Right ventricle myocardium inferior (tissue), 1 donor: ENCODE measurements at regions of chr4 and their contacts with region 1.

Region 1: GRCh38 chr4:184538023-184538599 is 63.8 kb upstream of the IRF2 start:
- DNase-seq: peak; percentile 94
- ATAC-seq: peak; percentile 93

Region 2: DNA sequence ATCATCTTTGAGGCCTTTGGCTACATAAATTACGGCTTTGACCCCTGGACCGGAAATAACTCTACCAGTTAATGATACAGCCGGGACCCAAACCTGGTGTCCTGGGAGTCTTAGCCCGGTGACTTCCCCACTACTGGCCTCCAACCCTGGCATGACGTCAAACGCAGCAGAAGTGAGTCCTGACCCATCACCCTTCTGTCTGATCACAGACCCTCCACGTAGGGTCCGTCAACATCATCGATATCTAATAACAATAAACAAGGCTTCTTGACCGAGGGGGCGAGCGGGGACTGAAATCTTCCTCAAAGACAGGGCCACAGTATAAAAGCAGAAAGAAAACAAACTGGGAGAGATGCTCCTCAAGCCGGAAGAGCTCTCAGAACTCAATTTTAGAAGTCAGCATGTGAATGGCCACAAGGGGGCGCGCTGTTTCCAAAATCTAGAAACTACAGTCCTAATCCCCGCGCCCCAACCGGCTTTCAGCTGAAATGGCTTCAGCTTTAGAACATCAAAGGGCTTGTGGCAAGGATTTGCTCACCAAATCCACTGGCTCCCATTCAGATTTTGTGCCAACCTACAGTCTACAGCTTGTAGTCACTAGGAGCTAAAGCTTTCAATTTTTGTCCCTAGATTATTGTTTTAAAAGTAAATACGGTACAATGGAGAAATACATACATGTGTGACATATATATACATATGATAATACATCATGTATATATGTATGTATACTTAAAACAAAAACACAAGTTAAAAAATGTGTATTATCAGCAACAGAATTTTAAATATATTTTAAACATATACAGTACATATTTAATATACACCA is 274.0 kb before region 1 on chr4:
- intact Hi-C with region 1: loop called (anchors 1 kb)
- DNase-seq: peak; percentile 96
- ATAC-seq: peak; percentile 82

Region 3: GRCh38 chr4:184287697-184288255 is 250.3 kb before region 1 on chr4:
- intact Hi-C with region 1: loop called (anchors 1 kb)
- DNase-seq: no peak
- ATAC-seq: peak; percentile 74

Region 4: DNA sequence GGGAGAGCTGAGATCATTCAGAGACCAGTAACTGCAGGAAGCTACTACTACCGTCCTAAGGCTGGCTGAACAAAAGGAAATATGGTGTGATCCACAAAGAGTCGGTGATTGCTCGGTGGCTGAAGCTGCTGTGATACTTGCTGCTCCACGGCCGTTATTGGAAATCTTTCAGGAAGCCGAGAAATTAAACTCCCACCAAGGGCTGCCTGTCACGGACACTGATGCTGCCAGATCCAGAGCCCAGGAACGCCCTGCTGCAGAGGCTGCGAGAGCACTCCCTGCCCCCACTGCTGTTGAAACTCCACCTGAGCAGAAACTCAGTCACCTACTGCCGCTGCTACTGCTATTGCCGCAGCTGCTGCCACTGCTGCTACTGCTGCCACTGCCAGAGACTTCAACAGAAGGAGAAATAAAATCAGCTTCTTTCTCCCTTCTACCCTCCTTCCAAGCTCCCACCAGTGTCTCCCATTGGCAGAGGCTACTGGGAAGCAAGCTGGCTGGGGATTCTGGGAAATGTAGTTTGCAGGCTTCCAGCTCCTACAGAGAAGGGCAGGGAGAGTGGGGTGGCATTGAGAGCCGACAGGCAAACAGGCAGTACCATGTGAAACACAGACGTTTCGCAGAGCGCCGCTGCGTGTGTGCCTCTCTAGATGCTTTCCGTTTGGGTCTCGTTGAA is 194.5 kb before region 1 on chr4:
- intact Hi-C with region 1: loop called (anchors 5 kb)
- DNase-seq: peak; percentile 85
- ATAC-seq: peak; percentile 78

Region 5: GRCh38 chr4:184384056-184384809 is 153.9 kb before region 1 on chr4:
- intact Hi-C with region 1: loop called (anchors 1 kb)
- DNase-seq: peak; percentile 60
- ATAC-seq: peak; percentile 58

Region 6: DNA sequence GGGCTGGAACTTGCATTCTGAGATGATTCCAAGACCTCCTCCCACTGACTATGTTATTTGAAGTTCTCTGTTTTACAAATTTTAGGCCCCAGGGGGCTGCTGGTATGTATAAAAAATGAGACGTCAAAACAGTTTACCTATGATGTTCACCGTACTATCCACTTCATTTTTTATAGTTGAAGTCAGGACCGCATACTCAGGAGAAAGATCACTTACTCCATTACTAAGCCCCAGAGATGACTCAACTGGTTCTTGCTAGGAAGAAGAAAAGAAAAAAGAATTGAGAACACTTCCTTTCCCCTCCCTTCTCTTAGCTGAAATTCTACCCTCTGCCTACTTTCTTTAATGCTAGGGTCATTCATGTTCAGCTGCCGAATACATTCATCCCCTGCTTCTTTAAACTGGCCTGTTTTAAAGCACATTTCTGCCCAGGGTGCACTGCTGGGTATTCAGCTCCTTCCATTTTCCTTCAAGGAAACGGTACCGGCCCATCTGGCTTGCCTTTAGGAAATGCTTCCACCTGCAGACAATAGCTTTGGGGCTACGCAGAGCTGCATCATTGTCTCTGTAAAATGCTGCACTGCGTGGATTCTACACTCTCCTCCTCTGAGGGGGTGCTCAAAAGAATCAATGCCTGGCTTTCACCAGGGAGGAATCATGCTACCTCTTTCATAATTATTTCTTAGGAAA is 129.9 kb before region 1 on chr4:
- intact Hi-C with region 1: loop called (anchors 5 kb)
- DNase-seq: no peak
- ATAC-seq: no peak

Region 7: DNA sequence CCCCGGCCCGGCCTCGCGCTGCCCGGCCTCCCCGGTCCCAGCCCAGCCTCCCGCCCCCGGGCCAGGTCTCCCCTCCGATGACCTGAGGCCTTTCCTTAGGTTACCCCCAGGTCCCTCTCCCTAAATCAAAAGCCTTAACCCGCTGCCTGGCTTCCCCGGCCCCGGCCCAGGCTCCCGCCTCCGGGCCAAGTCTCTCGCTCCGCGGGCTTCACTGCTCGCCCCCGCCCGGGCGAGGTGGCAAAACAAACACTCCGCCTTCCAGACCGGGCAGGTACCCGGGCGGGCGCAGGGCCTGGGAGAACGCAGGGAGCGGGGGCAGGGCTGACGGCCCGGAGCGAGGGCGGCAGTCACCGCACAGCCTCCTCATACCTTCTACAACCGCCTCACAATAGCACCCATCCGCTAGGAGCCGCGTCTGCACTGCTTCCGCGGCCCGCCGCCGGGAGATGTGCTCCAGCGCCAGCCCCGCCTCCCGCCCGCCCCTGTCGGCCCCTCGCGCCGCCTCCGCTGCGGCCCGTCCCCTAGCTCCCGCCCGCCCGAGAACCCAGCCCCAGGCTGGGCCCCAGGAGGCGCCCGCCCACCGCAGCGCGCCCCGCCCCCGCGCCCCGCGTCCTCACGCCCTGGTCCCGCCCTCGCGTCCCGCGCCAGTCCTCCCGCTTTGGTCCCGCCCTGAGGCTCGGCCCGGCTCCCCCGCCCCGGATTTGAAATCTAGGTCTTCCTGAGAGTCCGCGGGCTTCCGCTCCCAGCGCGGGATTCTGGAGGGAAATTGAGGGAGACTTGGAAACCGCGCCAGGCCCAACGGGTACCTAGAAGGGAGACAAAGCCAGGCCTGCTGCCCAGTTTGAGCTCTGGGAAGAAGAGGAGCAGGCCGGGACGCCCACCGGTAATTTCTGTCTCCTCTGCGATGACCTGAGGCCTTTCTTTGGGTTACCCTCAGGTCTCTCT is 111.2 kb after region 1 on chr4 and contains the starts of genes CASP3 and PRIMPOL:
- intact Hi-C with region 1: loop called (anchors 2 kb)
- DNase-seq: peak; percentile 99
- ATAC-seq: peak; percentile 98
- total RNA-seq, gene CASP3: 10.4 TPM
- total RNA-seq, gene PRIMPOL: 10.8 TPM

Region 8: DNA sequence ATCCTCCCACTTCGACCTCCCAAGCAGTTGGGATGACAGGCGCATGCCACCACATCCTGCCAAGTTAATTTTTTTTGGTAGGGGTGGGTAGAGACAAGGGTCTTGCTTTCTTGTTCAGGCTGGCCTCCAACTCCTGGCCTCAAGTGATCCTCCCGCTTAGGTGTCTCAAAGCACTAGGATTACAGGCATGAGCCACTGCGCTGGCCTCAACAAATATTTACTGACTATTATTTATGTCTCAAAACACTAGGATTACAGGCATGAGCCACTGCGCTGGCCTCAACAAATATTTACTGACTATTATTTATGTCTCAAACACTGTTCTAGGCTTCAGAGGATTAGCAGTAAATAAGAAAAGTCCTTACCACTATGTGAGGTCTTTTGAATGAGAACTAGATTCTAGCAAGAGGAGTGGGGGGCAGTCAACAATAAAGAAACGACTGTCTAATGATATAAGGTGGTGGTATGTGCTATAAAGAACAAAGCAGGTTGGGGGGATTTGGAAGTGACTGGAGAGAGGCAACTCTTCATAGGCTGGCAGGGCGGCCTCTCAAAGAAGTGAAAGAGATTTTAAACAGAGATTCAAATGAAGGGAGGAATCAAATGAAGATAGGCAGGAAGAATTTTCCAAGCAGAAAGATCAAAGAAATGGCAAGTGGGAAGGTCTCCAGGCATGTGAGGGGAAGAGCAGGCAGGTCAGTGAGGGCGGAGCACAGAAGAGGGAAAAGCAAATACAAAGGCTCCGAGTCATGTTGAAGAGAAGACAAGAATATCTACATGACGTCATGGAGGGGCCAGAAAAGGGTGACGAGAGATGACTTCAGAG is 300.4 kb after region 1 on chr4:
- intact Hi-C with region 1: no loop called
- DNase-seq: no peak
- ATAC-seq: no peak